CD4-positive, alpha-beta T cell (primary cell): ENCODE measurements at regions of chr19 and their contacts with region 1.

Region 1: DNA sequence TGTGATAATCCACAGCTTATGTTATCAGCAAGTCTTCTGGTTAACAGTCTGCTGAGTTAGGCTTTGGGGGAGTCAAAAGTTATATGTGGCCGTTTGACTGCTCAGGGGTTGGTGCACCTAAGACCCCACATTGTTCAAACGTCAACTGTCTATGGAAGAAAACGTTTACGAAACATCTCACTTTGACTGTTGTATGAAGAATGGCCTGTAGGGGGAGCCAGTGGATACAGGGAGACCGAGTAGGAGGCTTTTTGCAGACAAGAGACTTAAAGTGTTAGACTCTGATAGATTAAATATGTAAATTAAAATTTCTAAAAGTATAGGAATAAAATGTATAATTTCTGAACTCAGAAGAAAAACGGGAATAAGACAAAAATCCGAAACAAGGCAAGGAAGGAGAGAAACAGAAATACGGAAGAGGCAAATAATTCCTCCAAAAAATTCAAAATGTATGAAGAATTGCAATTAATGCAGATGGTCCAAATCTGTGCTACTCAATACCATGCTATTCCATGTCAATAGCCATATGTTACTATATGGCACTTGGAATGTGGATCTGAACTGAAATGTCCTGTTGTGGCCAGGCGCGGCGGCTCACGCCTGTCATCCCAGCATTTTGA is 37.8 kb downstream of the TNFSF14 start:
- DNase-seq: peak; percentile 39 to 91 (median 74)
- ATAC-seq: peak; percentile 77
- H3K4me3 ChIP-seq: no peak overlapping the region
- H3K4me3 Mint-ChIP-seq: no peak overlapping the region
- H3K27ac ChIP-seq: no peak overlapping the region
- H3K27ac Mint-ChIP-seq: no peak overlapping the region
- H3K4me1 ChIP-seq: peaks cover 6% of the 10 kb centered on the region
- H3K4me1 Mint-ChIP-seq: peaks cover 4% of the 10 kb centered on the region
- H3K27me3 ChIP-seq: no peaks in the 10 kb centered on the region
- H3K27me3 Mint-ChIP-seq: peaks cover 4% of the 10 kb centered on the region
- CTCF ChIP-seq: peak; percentile 94

Region 2: GRCh38 chr19:6516659-6517291 is 115.3 kb before region 1 on chr19:
- CTCF ChIA-PET with region 1: interaction called, 7 read pairs
- POLR2A ChIA-PET with region 1: no interaction called
- intact Hi-C with region 1: loop called (anchors 2 kb)
- DNase-seq: peak; percentile 81 to 95 (median 90)
- ATAC-seq: peak; percentile 91
- H3K4me3 ChIP-seq: peak overlapping the region; percentile 86
- H3K4me3 Mint-ChIP-seq: peak overlapping the region; percentile 94
- H3K27ac ChIP-seq: no peak overlapping the region
- H3K27ac Mint-ChIP-seq: peak overlapping the region; percentile 24
- H3K4me1 ChIP-seq: peaks cover 32% of the 10 kb centered on the region
- H3K4me1 Mint-ChIP-seq: peaks cover 33% of the 10 kb centered on the region
- H3K27me3 ChIP-seq: no peaks in the 10 kb centered on the region
- H3K27me3 Mint-ChIP-seq: no peaks in the 10 kb centered on the region
- CTCF ChIP-seq: peak; percentile 95

Region 3: GRCh38 chr19:6674868-6675305 is 42.8 kb after region 1 on chr19:
- CTCF ChIA-PET with region 1: interaction called, 5 read pairs
- POLR2A ChIA-PET with region 1: no interaction called
- intact Hi-C with region 1: loop called in 1 of 2 experiments (anchors 5 kb)
- DNase-seq: peak; percentile 49 to 93 (median 78)
- ATAC-seq: peak; percentile 79
- H3K4me3 ChIP-seq: peak overlapping the region; percentile 24
- H3K4me3 Mint-ChIP-seq: peak overlapping the region; percentile 60
- H3K27ac ChIP-seq: peak overlapping the region in 1 of 2 donors; percentile 18
- H3K27ac Mint-ChIP-seq: peak overlapping the region; percentile 71
- H3K4me1 ChIP-seq: peaks cover 66% of the 10 kb centered on the region
- H3K4me1 Mint-ChIP-seq: peaks cover 50% of the 10 kb centered on the region
- H3K27me3 ChIP-seq: no peaks in the 10 kb centered on the region
- H3K27me3 Mint-ChIP-seq: no peaks in the 10 kb centered on the region
- CTCF ChIP-seq: no peak

Region 4: GRCh38 chr19:6753178-6754031 is 121.3 kb after region 1 on chr19:
- CTCF ChIA-PET with region 1: no interaction called
- POLR2A ChIA-PET with region 1: no interaction called
- intact Hi-C with region 1: loop called in 1 of 2 experiments (anchors 1 kb)
- DNase-seq: peak; percentile 58 to 89 (median 73)
- ATAC-seq: peak; percentile 92
- H3K4me3 ChIP-seq: peak overlapping the region; percentile 47
- H3K4me3 Mint-ChIP-seq: peak overlapping the region; percentile 79
- H3K27ac ChIP-seq: peak overlapping the region; percentile 2 to 15
- H3K27ac Mint-ChIP-seq: peak overlapping the region; percentile 80
- H3K4me1 ChIP-seq: peaks cover 14% of the 10 kb centered on the region
- H3K4me1 Mint-ChIP-seq: peaks cover 11% of the 10 kb centered on the region
- H3K27me3 ChIP-seq: no peaks in the 10 kb centered on the region
- H3K27me3 Mint-ChIP-seq: no peaks in the 10 kb centered on the region
- CTCF ChIP-seq: peak; percentile 59

Region 5: GRCh38 chr19:6767357-6768235 is 135.5 kb after region 1 on chr19 and contains the start of gene SH2D3A:
- CTCF ChIA-PET with region 1: no interaction called
- POLR2A ChIA-PET with region 1: no interaction called
- intact Hi-C with region 1: loop called in 1 of 2 experiments (anchors 5 kb)
- DNase-seq: peak; percentile 90 to 99 (median 95)
- ATAC-seq: peak; percentile 71
- H3K4me3 ChIP-seq: peak within 1 kb of the TSS; percentile 92
- H3K4me3 Mint-ChIP-seq: peak within 1 kb of the TSS; percentile 92
- H3K27ac ChIP-seq: peak within 1 kb of the TSS; percentile 93
- H3K27ac Mint-ChIP-seq: peak within 1 kb of the TSS; percentile 96
- H3K4me1 ChIP-seq: peaks cover 65% of the 10 kb centered on the region
- H3K4me1 Mint-ChIP-seq: peaks cover 47% of the 10 kb centered on the region
- H3K27me3 ChIP-seq: no peaks in the 10 kb centered on the region
- H3K27me3 Mint-ChIP-seq: no peaks in the 10 kb centered on the region
- CTCF ChIP-seq: no peak
- total RNA-seq, gene SH2D3A: 39.2 to 41.3 TPM